HepG2 (cell line): ENCODE measurements at regions of chr13 and their contacts with region 1.

Region 1: DNA sequence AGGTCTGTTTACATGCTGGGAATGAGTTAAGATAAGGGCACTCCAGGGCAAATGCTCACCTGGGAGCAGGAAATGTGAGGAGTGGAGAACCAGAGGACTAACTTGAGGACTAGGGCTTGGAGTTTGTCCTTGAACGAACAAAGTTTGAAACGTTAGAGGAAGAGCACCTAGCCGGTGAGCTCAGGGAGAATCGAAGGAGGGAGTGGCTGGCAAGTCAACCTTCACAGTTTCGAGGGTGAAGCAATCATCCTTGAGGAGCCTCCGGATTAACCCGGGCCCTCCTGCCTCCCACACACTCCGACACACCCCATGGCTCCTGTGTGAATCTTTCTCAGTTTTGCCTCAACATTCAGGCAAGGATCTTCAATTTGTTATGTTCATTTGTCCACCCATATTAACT is 58.6 kb downstream of the LMO7 start:
- DNase-seq: no peak
- ATAC-seq: no peak
- H3K4me3 ChIP-seq: no peak overlapping the region
- H3K27ac ChIP-seq: no peak overlapping the region
- H3K4me1 ChIP-seq: no peaks in the 10 kb centered on the region
- H3K27me3 ChIP-seq: no peaks in the 10 kb centered on the region
- CTCF ChIP-seq: no peak
- EP300 ChIP-seq: no peak
- POLR2A ChIP-seq: no peak
- RAD21 ChIP-seq: no peak

Region 2: DNA sequence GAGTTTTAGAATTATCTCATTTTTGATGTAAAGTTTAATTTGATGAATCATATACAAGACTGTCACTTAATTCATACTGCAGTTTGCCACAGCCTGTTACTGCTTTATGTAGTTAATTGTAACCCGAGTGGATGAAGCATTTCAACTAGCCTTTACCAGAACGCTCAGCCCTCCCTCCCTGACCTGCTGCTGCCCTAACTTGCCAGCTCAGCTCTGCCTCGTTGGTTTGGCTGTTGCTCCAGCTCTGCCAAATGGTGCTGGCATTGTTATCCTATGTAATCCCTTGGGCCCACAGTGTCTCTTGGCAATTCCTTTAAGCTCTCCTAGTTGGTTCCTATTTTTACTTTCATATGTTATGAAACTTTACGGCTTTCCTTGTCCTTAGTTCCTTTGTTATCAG is 54.7 kb after region 1 on chr13:
- CTCF ChIA-PET with region 1: no interaction called
- POLR2A ChIA-PET with region 1: no interaction called
- in situ Hi-C with region 1: no loop called
- intact Hi-C with region 1: no loop called
- DNase-seq: no peak
- ATAC-seq: no peak
- H3K4me3 ChIP-seq: no peak overlapping the region
- H3K27ac ChIP-seq: no peak overlapping the region
- H3K4me1 ChIP-seq: peaks cover 12% of the 10 kb centered on the region
- H3K27me3 ChIP-seq: no peaks in the 10 kb centered on the region
- CTCF ChIP-seq: no peak
- EP300 ChIP-seq: no peak
- POLR2A ChIP-seq: no peak
- RAD21 ChIP-seq: no peak

Region 3: DNA sequence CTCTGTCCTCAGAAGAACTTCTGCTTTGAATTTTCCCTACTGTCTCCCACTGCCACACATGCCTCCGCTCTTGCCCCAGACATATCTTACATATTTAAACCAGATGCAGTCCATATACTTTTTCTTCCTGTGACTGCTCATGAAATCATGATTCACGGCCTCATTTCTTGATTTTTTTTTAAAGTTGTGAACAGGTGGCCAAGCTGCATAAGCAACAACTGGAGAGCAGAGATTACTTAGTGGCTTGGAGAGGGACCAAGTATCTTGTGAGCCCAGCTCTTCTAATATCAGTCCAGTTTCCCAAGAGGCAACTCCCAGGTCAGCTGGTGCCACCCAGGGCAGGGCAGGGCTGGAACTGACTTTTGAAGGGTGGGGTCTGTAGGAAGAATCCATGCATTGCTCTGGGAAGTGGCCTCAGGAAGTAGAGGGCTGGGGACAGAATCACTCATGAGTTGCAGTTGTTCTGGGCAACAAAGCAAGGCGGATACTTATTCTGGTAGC is 93.8 kb after region 1 on chr13:
- CTCF ChIA-PET with region 1: no interaction called
- POLR2A ChIA-PET with region 1: interaction called, 3 read pairs
- in situ Hi-C with region 1: loop called (anchors 10 kb)
- intact Hi-C with region 1: loop called (anchors 5 kb)
- DNase-seq: no peak
- ATAC-seq: no peak
- H3K4me3 ChIP-seq: no peak overlapping the region
- H3K27ac ChIP-seq: peak overlapping the region; percentile 14
- H3K4me1 ChIP-seq: peaks cover 75% of the 10 kb centered on the region
- H3K27me3 ChIP-seq: no peaks in the 10 kb centered on the region
- CTCF ChIP-seq: no peak
- EP300 ChIP-seq: no peak
- POLR2A ChIP-seq: no peak
- RAD21 ChIP-seq: no peak

Region 4: GRCh38 chr13:76129305-76130000 is 434.7 kb after region 1 on chr13:
- CTCF ChIA-PET with region 1: no interaction called
- POLR2A ChIA-PET with region 1: no interaction called
- in situ Hi-C with region 1: no loop called
- intact Hi-C with region 1: no loop called
- DNase-seq: no peak
- ATAC-seq: no peak
- H3K4me3 ChIP-seq: no peak overlapping the region
- H3K27ac ChIP-seq: no peak overlapping the region
- H3K4me1 ChIP-seq: no peaks in the 10 kb centered on the region
- H3K27me3 ChIP-seq: no peaks in the 10 kb centered on the region
- CTCF ChIP-seq: no peak
- EP300 ChIP-seq: no peak
- POLR2A ChIP-seq: no peak
- RAD21 ChIP-seq: no peak